Activated CD4-positive, alpha-beta T cell treated with anti-CD3 and anti-CD28 coated beads, Interleukin-2, amount 10 ng/mL, durations not matched to agents 7 days and 5 days (primary cell): ENCODE measurements at regions of chr16 and their contacts with region 1.

Region 1: DNA sequence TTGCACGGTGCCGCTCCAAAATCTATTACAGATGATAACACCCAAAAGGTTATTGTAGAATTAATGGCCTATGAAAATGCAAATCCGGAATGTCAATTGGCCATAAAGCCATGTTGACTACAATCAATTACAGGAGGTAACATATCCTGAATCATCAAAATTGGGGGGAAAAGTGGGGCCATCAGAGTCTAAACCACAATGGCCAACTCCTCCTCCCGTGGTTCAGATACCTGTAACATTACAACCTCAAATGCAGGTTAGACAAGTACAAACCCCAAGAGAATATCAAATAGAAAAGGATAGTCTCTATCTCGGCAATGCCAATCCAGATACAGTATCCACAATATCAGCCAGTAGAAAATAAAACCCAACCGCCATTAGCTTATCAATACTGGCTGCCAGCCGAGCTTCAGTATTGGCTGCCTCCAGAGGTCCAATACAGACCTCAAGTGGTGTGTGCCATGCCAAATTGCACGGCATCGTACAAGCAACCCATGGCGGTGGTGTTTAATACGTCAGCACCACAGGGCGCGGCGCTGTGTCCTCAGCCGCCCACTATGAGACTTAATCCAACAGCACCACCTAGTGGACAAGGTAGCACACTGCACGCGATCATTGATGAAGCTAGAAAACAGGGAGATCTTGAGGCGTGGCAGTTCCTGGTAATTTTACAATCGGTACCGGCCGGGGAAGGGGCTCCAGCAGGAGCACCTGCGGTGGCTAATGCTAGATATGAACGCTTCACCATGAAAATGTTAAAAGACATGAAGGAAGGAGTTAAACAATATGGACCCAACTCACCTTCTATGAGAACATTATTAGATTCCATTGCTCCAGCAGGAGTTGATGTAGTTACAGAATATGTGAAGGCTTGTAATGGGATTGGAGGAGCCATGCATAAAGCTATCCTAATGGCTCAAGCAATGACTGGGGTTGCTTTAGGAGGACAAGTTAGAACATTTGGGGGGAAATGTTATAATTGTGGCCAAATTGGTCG is 15.2 kb downstream of the FLYWCH1 start:
- DNase-seq: peak; percentile 92
- H3K4me3 Mint-ChIP-seq: no peak overlapping the region
- H3K27ac Mint-ChIP-seq: peak overlapping the region; percentile 37
- H3K4me1 Mint-ChIP-seq: peaks cover 17% of the 10 kb centered on the region
- H3K27me3 Mint-ChIP-seq: no peaks in the 10 kb centered on the region

Region 2: DNA sequence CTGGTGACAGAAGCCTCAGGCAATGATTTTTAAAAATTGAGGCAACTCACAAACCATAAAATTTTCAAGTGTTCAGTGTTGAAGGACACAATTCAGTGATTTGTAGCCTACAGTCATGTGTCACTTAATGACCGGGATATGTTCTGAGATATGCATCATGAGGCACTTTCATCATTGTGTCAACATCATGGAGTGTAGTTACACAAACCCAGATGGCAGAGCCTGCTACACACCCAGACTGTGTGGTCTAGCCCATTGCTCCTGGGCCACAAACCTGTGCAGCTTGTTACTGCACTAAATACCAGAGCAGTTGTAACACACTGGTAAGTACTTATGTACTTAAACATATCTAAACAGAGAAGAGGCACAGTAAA is 127.1 kb before region 1 on chr16:
- CTCF ChIA-PET with region 1: no interaction called
- POLR2A ChIA-PET with region 1: no interaction called
- DNase-seq: no peak
- H3K4me3 Mint-ChIP-seq: no peak overlapping the region
- H3K27ac Mint-ChIP-seq: no peak overlapping the region
- H3K4me1 Mint-ChIP-seq: no peaks in the 10 kb centered on the region
- H3K27me3 Mint-ChIP-seq: peaks cover 8% of the 10 kb centered on the region

Region 3: DNA sequence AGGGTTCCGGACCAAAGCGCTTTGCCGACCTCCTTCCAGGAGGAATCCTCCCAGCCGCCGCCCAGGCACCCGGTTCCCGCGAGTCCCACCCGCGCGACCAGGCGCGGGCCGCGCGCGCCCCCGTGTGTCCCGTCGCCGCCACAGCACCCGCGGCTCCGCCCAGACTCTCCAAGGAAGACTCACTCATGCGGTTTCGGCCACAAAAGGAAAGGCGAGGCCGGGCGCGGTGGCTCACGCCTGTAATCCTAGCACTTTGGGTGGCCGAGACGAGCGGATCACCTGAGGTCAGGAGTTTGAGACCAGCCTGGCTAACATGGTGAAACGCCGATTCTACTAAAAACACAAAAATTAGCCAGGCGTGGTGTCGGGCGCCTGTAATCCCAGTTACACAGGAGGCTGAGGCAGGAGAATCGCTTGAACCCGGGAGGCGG is 56.8 kb after region 1 on chr16:
- CTCF ChIA-PET with region 1: no interaction called
- POLR2A ChIA-PET with region 1: no interaction called
- DNase-seq: peak; percentile 72
- H3K4me3 Mint-ChIP-seq: peak overlapping the region; percentile 44
- H3K27ac Mint-ChIP-seq: peak overlapping the region; percentile 54
- H3K4me1 Mint-ChIP-seq: peaks cover 27% of the 10 kb centered on the region
- H3K27me3 Mint-ChIP-seq: no peaks in the 10 kb centered on the region

Region 4: DNA sequence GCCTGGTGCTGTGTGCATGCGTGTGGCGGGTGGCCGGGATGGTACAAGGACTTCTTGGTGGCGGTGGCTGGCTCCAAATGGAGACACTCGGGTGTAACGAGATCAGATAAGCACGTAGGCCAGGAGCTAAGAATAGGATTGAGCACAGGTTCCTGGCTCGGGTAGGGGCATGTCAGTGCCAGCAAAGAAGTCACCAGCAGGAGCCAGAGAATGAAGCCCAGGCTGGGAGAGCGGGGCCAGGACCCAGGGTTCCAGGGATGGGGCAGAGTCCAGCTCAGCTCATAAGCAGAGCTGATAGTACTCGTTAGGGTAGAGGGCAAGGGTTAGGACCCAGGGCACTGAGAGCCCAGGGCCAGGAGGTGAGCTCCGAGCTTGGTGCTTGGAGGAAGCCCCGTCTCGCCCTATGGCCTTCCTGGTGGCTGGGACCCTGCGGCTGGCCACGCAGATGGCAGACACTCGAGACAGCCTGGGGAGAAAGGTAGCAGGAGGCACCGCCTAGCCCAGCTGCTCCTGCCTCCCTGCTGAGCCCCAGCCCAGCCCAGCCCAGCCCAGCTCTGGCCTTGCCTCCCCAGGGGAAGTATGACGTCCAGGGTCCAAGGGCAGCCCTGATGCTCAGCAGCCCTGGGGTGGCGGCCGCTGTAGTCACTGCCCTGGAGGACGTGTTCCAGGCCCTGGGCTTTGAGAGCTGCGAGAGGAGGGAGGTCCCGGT is 216.8 kb after region 1 on chr16:
- CTCF ChIA-PET with region 1: no interaction called
- POLR2A ChIA-PET with region 1: interaction called, 10 read pairs
- DNase-seq: no peak
- H3K4me3 Mint-ChIP-seq: no peak overlapping the region
- H3K27ac Mint-ChIP-seq: no peak overlapping the region
- H3K4me1 Mint-ChIP-seq: no peaks in the 10 kb centered on the region
- H3K27me3 Mint-ChIP-seq: no peaks in the 10 kb centered on the region